ENCODE measurements at regions of chr1 and their contacts with region 1.

Region 1: DNA sequence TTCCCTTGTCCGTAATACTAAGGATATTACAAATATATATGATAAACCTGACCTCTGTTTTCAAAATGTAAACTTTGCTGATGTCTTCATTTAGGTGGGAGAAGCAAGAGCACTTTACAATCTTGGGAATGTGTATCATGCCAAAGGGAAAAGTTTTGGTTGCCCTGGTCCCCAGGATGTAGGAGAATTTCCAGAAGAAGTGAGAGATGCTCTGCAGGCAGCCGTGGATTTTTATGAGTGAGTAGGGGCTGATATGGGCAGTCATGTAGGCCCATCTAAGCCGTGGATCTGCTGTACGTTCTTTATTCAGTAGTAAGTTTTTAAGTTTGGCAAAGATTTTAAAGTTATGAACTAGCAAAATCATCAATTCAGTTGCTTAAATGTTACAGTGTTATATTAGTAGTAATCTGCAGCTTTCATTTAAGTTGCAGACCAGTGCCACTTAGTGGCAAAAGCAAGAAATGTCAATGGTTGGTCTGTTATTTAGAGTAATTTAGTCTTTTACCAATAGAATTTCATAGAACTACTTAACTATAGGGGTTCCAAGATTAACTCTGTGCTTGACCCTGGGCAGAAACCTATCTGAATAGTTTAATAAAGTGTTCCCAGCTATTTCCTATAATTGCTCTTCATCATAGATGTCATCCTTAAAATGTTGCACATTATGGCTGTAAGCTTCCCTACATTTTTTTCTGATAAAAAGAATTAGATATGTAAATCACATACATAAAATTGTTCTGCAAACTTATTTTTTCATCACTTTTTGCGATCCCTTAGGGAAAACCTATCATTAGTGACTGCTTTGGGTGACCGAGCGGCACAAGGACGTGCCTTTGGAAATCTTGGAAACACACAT is 21.3 kb downstream of the GPSM2 start:
- DNase-seq: peak in 20 of 35 experiments; percentile 6 to 70 (median 16)
- ATAC-seq: peak; percentile 75 to 78 (median 75)
- H3K4me3 ChIP-seq: no peak overlapping the region
- H3K4me3 Mint-ChIP-seq: no peak overlapping the region
- H3K27ac ChIP-seq: no peak overlapping the region
- H3K27ac Mint-ChIP-seq: no peak overlapping the region
- H3K4me1 ChIP-seq: no peaks in the 10 kb centered on the region
- H3K4me1 Mint-ChIP-seq: no peaks in the 10 kb centered on the region
- H3K27me3 ChIP-seq: no peaks in the 10 kb centered on the region
- H3K27me3 Mint-ChIP-seq: no peaks in the 10 kb centered on the region

Region 2: GRCh38 chr1:108828022-108828961 is 69.8 kb before region 1 on chr1:
- CTCF ChIA-PET with region 1: interaction called, 23 to 41 read pairs
- POLR2A ChIA-PET with region 1: no interaction called
- DNase-seq: peak; percentile 22 to 75 (median 58)
- ATAC-seq: peak in 3 of 4 experiments; percentile 56 to 68 (median 65)
- H3K4me3 ChIP-seq: no peak overlapping the region
- H3K4me3 Mint-ChIP-seq: no peak overlapping the region
- H3K27ac ChIP-seq: no peak overlapping the region
- H3K27ac Mint-ChIP-seq: no peak overlapping the region
- H3K4me1 ChIP-seq: peaks cover 0 to 6% of the 10 kb centered on the region in 2 experiments
- H3K4me1 Mint-ChIP-seq: peaks cover 0 to 11% (median 2%) of the 10 kb centered on the region in 3 donors
- H3K27me3 ChIP-seq: no peaks in the 10 kb centered on the region
- H3K27me3 Mint-ChIP-seq: no peaks in the 10 kb centered on the region